CD8-positive, alpha-beta T cell (primary cell): ENCODE measurements at regions of chr7 and their contacts with region 1.

Region 1: DNA sequence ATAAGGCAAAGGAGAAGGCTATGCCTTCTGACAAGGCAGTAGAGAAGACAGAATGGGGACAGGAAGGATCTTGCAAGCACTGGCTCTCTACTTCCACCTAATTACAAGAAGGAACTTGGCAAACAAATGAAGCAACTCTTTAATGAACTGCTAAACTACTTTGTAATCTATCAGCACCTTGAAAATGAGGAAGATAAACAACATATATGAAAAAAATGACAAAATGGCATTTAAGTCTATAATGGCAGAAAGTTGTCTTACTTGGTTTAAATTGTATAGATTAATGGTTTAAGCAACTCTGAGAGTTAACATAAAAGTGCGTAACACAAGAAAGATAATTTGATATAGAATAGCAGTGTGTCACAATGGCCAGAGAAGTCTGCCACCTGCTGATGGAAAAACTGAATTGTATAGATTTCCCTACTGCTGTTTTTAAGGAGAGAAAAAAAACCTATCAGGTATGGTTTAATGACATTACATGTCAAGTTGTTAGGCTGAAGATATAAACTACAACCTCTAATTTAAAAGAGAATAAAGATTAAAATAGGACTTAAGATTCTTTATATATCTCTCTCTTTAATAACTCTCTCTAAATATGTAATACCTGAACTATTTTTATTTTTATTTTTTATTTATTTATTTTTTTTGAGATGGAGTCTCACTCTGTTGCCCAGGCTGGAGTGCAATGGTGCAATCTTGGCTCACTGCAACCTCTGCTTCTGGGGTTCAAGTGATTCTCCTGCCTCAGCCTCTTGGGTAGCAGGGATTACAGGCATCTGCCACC is 11.8 kb downstream of the NT5C3A start:
- DNase-seq: peak in 5 of 9 experiments; percentile 11 to 73 (median 29)
- ATAC-seq: peak; percentile 63
- H3K4me3 ChIP-seq: no peak overlapping the region
- H3K4me3 Mint-ChIP-seq: no peak overlapping the region
- H3K27ac ChIP-seq: no peak overlapping the region
- H3K27ac Mint-ChIP-seq: no peak overlapping the region
- H3K4me1 ChIP-seq: peaks cover 20% of the 10 kb centered on the region
- H3K4me1 Mint-ChIP-seq: peaks cover 57% of the 10 kb centered on the region
- H3K27me3 ChIP-seq: no peaks in the 10 kb centered on the region
- H3K27me3 Mint-ChIP-seq: no peaks in the 10 kb centered on the region
- CTCF ChIP-seq: peak; percentile 78

Region 2: GRCh38 chr7:32694182-32694581 is 356.5 kb before region 1 on chr7:
- CTCF ChIA-PET with region 1: interaction called, 3 read pairs
- POLR2A ChIA-PET with region 1: no interaction called
- intact Hi-C with region 1: loop called in 1 of 2 experiments (anchors 2 kb)
- DNase-seq: no peak
- ATAC-seq: no peak
- H3K4me3 ChIP-seq: no peak overlapping the region
- H3K4me3 Mint-ChIP-seq: no peak overlapping the region
- H3K27ac ChIP-seq: no peak overlapping the region
- H3K27ac Mint-ChIP-seq: no peak overlapping the region
- H3K4me1 ChIP-seq: no peaks in the 10 kb centered on the region
- H3K4me1 Mint-ChIP-seq: peaks cover 6% of the 10 kb centered on the region
- H3K27me3 ChIP-seq: no peaks in the 10 kb centered on the region
- H3K27me3 Mint-ChIP-seq: no peaks in the 10 kb centered on the region
- CTCF ChIP-seq: no peak

Region 3: GRCh38 chr7:32765185-32765584 is 285.5 kb before region 1 on chr7:
- CTCF ChIA-PET with region 1: no interaction called
- POLR2A ChIA-PET with region 1: no interaction called
- intact Hi-C with region 1: loop called in 1 of 2 experiments (anchors 5 kb)
- DNase-seq: no peak
- ATAC-seq: no peak
- H3K4me3 ChIP-seq: no peak overlapping the region
- H3K4me3 Mint-ChIP-seq: no peak overlapping the region
- H3K27ac ChIP-seq: no peak overlapping the region
- H3K27ac Mint-ChIP-seq: no peak overlapping the region
- H3K4me1 ChIP-seq: peaks cover 4% of the 10 kb centered on the region
- H3K4me1 Mint-ChIP-seq: peaks cover 12% of the 10 kb centered on the region
- H3K27me3 ChIP-seq: peaks cover 0 to 7% of the 10 kb centered on the region in 2 experiments
- H3K27me3 Mint-ChIP-seq: peaks cover 39% of the 10 kb centered on the region
- CTCF ChIP-seq: no peak

Region 4: GRCh38 chr7:32803406-32804141 is 247.2 kb before region 1 on chr7:
- CTCF ChIA-PET with region 1: no interaction called
- POLR2A ChIA-PET with region 1: no interaction called
- intact Hi-C with region 1: loop called in 1 of 2 experiments (anchors 2 kb)
- DNase-seq: no peak
- ATAC-seq: no peak
- H3K4me3 ChIP-seq: no peak overlapping the region
- H3K4me3 Mint-ChIP-seq: no peak overlapping the region
- H3K27ac ChIP-seq: no peak overlapping the region
- H3K27ac Mint-ChIP-seq: no peak overlapping the region
- H3K4me1 ChIP-seq: no peaks in the 10 kb centered on the region
- H3K4me1 Mint-ChIP-seq: no peaks in the 10 kb centered on the region
- H3K27me3 ChIP-seq: no peaks in the 10 kb centered on the region
- H3K27me3 Mint-ChIP-seq: peaks cover 2% of the 10 kb centered on the region
- CTCF ChIP-seq: no peak

Region 5: DNA sequence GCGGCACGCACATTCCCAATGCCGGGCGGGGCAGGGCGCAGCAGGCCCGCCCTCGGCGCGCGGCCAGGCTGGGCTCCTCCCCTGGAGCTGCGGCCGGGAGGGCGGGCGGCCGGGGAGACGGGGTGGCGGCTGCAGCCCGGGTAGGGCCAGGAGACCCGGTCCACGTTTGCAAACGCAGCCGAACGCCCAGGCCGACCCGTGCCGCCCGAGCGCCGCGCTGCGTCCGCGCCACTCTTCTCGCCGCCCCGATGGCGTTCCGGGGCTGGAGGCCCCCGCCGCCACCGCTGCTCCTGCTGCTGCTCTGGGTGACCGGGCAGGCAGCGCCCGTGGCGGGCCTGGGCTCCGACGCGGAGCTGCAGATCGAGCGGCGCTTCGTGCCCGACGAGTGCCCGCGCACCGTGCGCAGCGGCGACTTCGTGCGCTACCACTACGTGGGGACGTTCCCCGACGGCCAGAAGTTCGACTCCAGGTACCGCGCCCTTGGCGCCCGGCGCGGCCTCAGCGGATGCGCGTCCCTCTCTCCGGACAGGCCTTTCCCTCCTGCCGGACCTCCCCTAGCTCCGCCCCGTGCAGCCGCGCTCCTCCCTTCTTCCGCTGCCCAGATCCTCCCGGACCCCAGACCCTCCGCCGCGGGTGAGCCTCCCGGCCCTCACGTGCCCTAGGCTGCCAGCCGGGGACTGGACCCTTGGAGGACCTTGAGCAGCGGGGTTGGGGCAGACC is 93.2 kb before region 1 on chr7 and contains the start of gene FKBP9:
- CTCF ChIA-PET with region 1: no interaction called
- POLR2A ChIA-PET with region 1: no interaction called
- intact Hi-C with region 1: loop called in 1 of 2 experiments (anchors 10 kb)
- DNase-seq: peak in 2 of 9 experiments; percentile 10
- ATAC-seq: no peak
- H3K4me3 ChIP-seq: peak within 1 kb of the TSS; percentile 20 to 41
- H3K4me3 Mint-ChIP-seq: peak within 1 kb of the TSS; percentile 72
- H3K27ac ChIP-seq: no peak within 1 kb of the TSS
- H3K27ac Mint-ChIP-seq: no peak within 1 kb of the TSS
- H3K4me1 ChIP-seq: peaks cover 3% of the 10 kb centered on the region
- H3K4me1 Mint-ChIP-seq: peaks cover 3% of the 10 kb centered on the region
- H3K27me3 ChIP-seq: peaks cover 9 to 12% of the 10 kb centered on the region in 2 experiments
- H3K27me3 Mint-ChIP-seq: peaks cover 32% of the 10 kb centered on the region
- CTCF ChIP-seq: no peak
- total RNA-seq, gene FKBP9: not detected